Activated naive CD4-positive, alpha-beta T cell treated with anti-CD3 and anti-CD28 coated beads for 36 hours (primary cell): ENCODE measurements at regions of chr7 and their contacts with region 1.

Region 1: GRCh38 chr7:87219545-87220025 is at the start of gene TMEM243:
- DNase-seq: peak; percentile 88
- H3K4me3 Mint-ChIP-seq: peak within 1 kb of the TSS; percentile 98
- H3K27ac Mint-ChIP-seq: peak within 1 kb of the TSS; percentile 97
- H3K4me1 Mint-ChIP-seq: peaks cover 28% of the 10 kb centered on the region
- H3K27me3 Mint-ChIP-seq: peaks cover 6% of the 10 kb centered on the region
- total RNA-seq, gene TMEM243: 50.4 to 53.1 TPM

Region 2: DNA sequence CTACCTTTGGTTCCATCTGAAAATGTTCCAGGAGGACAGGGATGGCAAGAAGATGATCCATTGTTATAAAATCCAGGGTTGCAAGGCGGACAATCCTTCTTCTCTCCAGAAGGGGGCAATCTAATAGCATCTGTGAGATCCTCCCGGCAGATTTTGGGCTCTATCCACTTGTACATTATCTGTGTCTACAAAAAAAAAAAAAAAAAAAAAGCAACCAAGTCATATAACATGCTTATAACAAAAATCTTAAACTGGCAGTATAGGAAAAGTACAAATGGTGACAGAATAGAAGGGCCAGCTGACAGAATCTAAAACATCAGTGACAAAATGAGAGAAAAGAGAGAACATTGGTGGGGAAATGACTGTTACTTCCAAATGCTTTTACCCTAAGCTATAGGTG is 292.9 kb before region 1 on chr7:
- CTCF ChIA-PET with region 1: no interaction called
- intact Hi-C with region 1: loop called (anchors 1 kb)
- DNase-seq: peak; percentile 43
- H3K4me3 Mint-ChIP-seq: no peak overlapping the region
- H3K27ac Mint-ChIP-seq: no peak overlapping the region
- H3K4me1 Mint-ChIP-seq: peaks cover 16% of the 10 kb centered on the region
- H3K27me3 Mint-ChIP-seq: peaks cover 2% of the 10 kb centered on the region

Region 3: DNA sequence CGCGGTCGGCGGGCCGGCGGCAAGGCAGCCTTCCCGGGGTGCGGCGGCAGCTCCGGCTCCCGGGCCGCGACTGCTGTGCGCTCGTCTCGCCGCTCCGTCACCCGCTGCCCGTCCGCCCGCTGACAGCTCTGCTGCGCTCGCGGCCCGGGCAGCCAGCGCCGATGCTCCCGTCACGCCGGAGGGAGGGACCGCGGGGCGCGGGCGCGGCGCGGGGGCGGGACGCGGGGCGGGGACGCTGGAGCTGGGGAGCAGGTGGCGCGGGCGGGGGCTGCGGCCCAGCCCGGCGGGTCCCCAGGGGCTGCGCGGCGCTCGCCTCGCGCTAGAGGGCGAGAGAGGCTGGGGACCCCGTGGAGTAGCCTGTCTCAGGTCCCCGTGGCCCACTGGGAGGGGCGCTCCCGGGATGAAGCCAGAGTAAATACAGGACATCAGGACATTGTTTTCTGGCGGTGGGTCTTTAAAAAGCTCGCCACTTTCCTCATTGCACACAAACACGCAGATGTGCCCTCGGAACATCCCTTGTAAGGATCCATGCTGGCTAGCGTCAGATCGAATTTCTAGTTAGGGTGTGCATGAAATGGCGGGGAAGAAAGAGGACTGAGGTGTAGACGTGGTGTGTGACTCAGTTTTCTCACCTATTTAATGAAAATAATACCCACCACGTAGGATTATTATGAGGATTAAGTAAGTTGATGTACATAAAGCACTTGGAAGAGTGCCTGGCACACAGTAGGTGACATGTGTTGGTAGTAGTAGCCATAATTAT is 159.9 kb before region 1 on chr7 and contains the start of gene ELAPOR2:
- CTCF ChIA-PET with region 1: interaction called, 3 read pairs
- intact Hi-C with region 1: loop called (anchors 1 kb)
- DNase-seq: peak; percentile 79
- H3K4me3 Mint-ChIP-seq: peak within 1 kb of the TSS; percentile 71
- H3K27ac Mint-ChIP-seq: no peak within 1 kb of the TSS
- H3K4me1 Mint-ChIP-seq: peaks cover 12% of the 10 kb centered on the region
- H3K27me3 Mint-ChIP-seq: peaks cover 5% of the 10 kb centered on the region
- total RNA-seq, gene ELAPOR2: 3.2 to 3.9 TPM

Region 4: GRCh38 chr7:87204933-87205332 is 14.7 kb before region 1 on chr7:
- CTCF ChIA-PET with region 1: interaction called, 3 read pairs
- intact Hi-C with region 1: loop called (anchors 1 kb)
- DNase-seq: no peak
- H3K4me3 Mint-ChIP-seq: no peak overlapping the region
- H3K27ac Mint-ChIP-seq: no peak overlapping the region
- H3K4me1 Mint-ChIP-seq: peaks cover 74% of the 10 kb centered on the region
- H3K27me3 Mint-ChIP-seq: no peaks in the 10 kb centered on the region

Region 5: GRCh38 chr7:87345166-87345927 is 125.8 kb after region 1 on chr7 and contains the start of gene CROT:
- CTCF ChIA-PET with region 1: no interaction called
- intact Hi-C with region 1: loop called (anchors 1 kb)
- DNase-seq: peak; percentile 97
- H3K4me3 Mint-ChIP-seq: peak within 1 kb of the TSS; percentile 89
- H3K27ac Mint-ChIP-seq: peak within 1 kb of the TSS; percentile 86
- H3K4me1 Mint-ChIP-seq: peaks cover 32% of the 10 kb centered on the region
- H3K27me3 Mint-ChIP-seq: no peaks in the 10 kb centered on the region
- total RNA-seq, gene CROT: 6.0 to 6.1 TPM

Region 6: GRCh38 chr7:87876040-87876868 is 656.7 kb after region 1 on chr7 and contains the starts of genes DBF4 and SLC25A40:
- CTCF ChIA-PET with region 1: no interaction called
- intact Hi-C with region 1: loop called (anchors 2 kb)
- DNase-seq: peak; percentile 94
- H3K4me3 Mint-ChIP-seq: peak within 1 kb of the TSS; percentile 91
- H3K27ac Mint-ChIP-seq: peak within 1 kb of the TSS; percentile 91
- H3K4me1 Mint-ChIP-seq: peaks cover 41% of the 10 kb centered on the region
- H3K27me3 Mint-ChIP-seq: no peaks in the 10 kb centered on the region
- total RNA-seq, gene DBF4: 70.1 to 70.6 TPM
- total RNA-seq, gene SLC25A40: 32.7 to 38.3 TPM

Region 7: DNA sequence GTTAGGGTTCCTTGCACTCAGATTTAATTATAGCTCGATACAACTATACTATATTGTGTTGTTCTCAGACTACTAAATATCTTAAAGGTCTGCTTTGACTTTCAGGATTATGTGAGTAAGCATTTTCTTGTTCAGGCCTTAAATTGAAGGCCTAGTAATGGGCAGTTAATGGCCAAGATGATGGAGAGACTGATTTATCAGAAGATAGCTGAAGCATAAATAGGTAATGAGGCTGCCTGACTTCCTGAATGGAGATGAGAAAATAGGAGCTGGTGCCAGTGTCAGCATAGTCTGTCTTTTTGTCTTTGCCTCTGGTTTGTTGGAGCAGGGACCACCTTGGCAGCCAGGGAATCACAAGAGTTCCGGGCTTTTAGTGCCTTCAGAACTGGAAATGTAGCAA is 746.7 kb after region 1 on chr7:
- CTCF ChIA-PET with region 1: no interaction called
- intact Hi-C with region 1: no loop called
- DNase-seq: no peak
- H3K4me3 Mint-ChIP-seq: no peak overlapping the region
- H3K27ac Mint-ChIP-seq: no peak overlapping the region
- H3K4me1 Mint-ChIP-seq: no peaks in the 10 kb centered on the region
- H3K27me3 Mint-ChIP-seq: no peaks in the 10 kb centered on the region

Region 8: DNA sequence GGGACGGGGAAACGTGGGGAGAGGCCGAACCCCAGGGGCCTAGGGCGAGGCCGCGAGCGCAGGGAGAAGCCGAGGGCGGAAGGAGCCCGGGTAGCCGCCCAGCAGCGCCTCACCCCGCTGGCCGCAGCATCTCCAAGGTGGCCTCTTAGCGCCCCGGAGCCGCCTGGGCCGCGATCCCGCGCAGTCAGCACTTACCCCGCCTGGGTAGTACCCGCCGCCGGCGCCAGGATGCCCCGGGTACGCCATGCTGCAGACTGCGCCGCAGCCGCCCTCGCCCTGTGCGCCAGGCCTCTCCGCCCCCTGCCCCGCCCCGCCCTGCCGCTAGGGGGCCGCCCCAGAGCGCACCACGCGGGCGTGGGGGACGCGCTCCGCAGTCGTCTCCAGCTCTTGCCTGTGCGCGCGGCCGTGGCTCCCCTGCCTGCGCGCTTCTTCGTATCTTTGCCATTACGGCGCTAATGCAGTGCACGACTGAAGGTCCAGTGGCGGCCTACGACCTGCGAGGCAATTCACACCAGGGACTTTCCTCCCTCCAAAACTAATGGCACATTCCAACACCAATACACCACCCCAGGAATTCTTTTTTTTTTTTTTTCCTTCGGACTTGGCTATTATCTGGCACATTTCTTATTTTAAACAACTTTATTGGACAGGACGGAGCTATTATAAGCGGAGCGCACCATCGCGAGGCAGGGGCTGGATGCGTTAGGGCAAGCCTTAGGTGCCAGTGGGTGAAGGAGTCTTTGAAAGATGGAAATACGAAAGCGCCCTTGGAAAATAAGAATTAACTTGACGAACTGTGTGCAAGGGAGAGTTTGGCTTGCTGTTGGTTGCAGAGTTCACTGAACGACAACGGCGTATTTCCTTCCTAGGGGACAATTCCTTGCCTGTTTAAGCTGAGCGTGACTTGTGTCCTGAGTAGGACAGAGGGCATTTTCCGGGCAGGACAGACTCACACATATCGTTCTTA is 1000.5 kb after region 1 on chr7 and contains the start of gene SRI:
- CTCF ChIA-PET with region 1: no interaction called
- intact Hi-C with region 1: loop called (anchors 5 kb)
- DNase-seq: peak; percentile 89
- H3K4me3 Mint-ChIP-seq: peak within 1 kb of the TSS; percentile 89
- H3K27ac Mint-ChIP-seq: peak within 1 kb of the TSS; percentile 88
- H3K4me1 Mint-ChIP-seq: peaks cover 23% of the 10 kb centered on the region
- H3K27me3 Mint-ChIP-seq: no peaks in the 10 kb centered on the region
- total RNA-seq, gene SRI: 152 to 168 TPM